ENCODE measurements at regions of chr7 and their contacts with region 1.

Region 1: GRCh38 chr7:75738987-75739795 is 450 bp upstream of the HIP1 start:
- DNase-seq: peak; percentile 99
- ATAC-seq: peak; percentile 87
- H3K4me3 ChIP-seq: peak overlapping the region; percentile 58 to 97 (median 91)
- H3K4me3 Mint-ChIP-seq: peak overlapping the region; percentile 94
- H3K27ac ChIP-seq: peak overlapping the region; percentile 81 to 95
- H3K27ac Mint-ChIP-seq: peak overlapping the region; percentile 97
- H3K4me1 ChIP-seq: peaks cover 31 to 38% of the 10 kb centered on the region in 2 donors
- H3K4me1 Mint-ChIP-seq: peaks cover 34% of the 10 kb centered on the region
- H3K27me3 ChIP-seq: no peaks in the 10 kb centered on the region
- H3K27me3 Mint-ChIP-seq: no peaks in the 10 kb centered on the region
- CTCF ChIP-seq: no peak

Region 2: DNA sequence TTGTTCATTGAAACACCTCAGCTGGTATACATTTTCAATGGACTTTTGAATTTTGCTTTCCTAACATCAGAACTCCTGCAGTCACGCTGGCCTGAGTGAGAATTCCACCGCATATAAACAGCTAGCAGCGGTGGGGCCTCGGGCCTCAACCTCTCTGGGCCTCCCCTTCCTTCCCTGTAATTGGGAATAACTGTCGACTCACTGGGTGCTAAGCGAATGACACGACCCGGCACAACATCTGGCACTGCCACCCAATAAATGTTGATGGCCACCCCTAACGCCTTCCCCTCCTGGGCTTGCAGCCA is 666.3 kb before region 1 on chr7:
- CTCF ChIA-PET with region 1: no interaction called
- POLR2A ChIA-PET with region 1: no interaction called
- intact Hi-C with region 1: loop called (anchors 10 kb)
- DNase-seq: no peak
- ATAC-seq: no peak
- H3K4me3 ChIP-seq: peak overlapping the region; percentile 21 to 79 (median 70)
- H3K4me3 Mint-ChIP-seq: peak overlapping the region; percentile 98
- H3K27ac ChIP-seq: peak overlapping the region; percentile 43 to 90
- H3K27ac Mint-ChIP-seq: peak overlapping the region; percentile 89
- H3K4me1 ChIP-seq: peaks cover 5 to 12% of the 10 kb centered on the region in 2 donors
- H3K4me1 Mint-ChIP-seq: peaks cover 12% of the 10 kb centered on the region
- H3K27me3 ChIP-seq: no peaks in the 10 kb centered on the region
- H3K27me3 Mint-ChIP-seq: no peaks in the 10 kb centered on the region
- CTCF ChIP-seq: no peak

Region 3: DNA sequence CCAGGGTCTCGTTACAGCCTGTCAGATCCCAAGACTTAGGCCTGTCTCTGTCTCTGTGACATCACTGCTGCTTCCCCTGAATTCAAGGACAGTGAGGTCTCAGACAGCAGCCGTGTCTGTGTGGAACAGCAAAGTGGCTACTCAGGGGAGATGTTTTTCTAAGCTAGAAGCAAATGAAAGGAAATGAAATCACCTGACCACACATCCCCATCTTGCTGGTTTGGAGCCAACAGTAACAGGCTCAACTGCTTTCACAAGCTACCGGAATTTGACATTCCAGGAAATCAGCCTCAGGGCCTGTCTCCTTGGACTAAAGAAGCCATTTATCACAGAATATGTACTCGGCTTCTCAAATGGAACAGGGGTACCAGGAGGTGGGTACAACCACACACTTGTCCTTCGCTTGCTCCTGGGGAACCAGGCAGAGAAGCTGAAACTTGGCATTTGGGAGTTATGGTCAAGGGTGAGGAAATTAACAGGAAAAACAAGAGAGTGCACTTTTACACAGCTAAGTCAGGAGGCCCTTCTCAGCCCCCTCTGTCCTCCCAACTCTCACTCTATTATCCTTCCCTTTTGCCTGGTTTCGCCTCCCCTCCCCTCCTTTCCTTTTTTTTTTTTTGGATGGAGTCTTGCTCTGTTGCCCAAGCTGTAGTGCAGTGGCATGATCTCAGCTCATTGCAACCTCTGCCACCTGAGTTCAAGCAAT is 173.9 kb before region 1 on chr7:
- CTCF ChIA-PET with region 1: no interaction called
- POLR2A ChIA-PET with region 1: no interaction called
- intact Hi-C with region 1: no loop called
- DNase-seq: no peak
- ATAC-seq: no peak
- H3K4me3 ChIP-seq: no peak overlapping the region
- H3K4me3 Mint-ChIP-seq: no peak overlapping the region
- H3K27ac ChIP-seq: no peak overlapping the region
- H3K27ac Mint-ChIP-seq: no peak overlapping the region
- H3K4me1 ChIP-seq: no peaks in the 10 kb centered on the region
- H3K4me1 Mint-ChIP-seq: peaks cover 4% of the 10 kb centered on the region
- H3K27me3 ChIP-seq: no peaks in the 10 kb centered on the region
- H3K27me3 Mint-ChIP-seq: no peaks in the 10 kb centered on the region
- CTCF ChIP-seq: no peak

Region 4: DNA sequence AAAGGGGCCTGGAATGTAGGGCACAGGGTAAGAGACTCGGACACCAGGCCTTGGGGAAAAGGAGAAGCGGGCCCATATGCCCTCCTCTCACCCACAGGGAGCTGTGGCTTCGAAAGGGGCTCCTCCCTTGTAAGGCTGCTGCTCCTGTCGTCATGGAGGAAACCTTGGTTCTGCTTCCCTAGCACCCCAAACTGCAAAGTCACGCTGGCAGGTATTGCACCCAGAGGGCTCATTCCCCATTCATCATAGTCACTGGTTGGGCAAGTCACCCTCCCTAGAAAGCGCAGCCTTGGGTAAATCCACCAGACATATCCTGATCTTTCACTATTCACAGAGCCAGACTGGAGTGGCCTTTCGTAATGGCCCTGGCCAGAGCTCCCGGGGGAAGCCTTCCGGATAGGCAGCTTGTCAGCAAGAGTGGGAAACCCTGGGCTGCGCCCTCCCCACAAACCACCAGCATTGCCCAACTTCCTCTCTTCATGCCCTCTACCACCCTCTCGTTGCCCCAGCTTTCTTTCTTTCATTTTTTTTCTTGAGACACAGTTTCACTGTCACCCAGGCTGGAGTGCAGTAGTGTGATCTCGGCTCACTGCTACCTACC is 121.5 kb before region 1 on chr7:
- CTCF ChIA-PET with region 1: no interaction called
- POLR2A ChIA-PET with region 1: interaction called, 4 read pairs
- intact Hi-C with region 1: loop called (anchors 2 kb)
- DNase-seq: peak; percentile 76
- ATAC-seq: peak; percentile 73
- H3K4me3 ChIP-seq: peak overlapping the region in 3 of 5 experiments; percentile 6 to 51 (median 38)
- H3K4me3 Mint-ChIP-seq: peak overlapping the region; percentile 89
- H3K27ac ChIP-seq: peak overlapping the region; percentile 11 to 47
- H3K27ac Mint-ChIP-seq: peak overlapping the region; percentile 95
- H3K4me1 ChIP-seq: peaks cover 53 to 58% of the 10 kb centered on the region in 2 donors
- H3K4me1 Mint-ChIP-seq: peaks cover 54% of the 10 kb centered on the region
- H3K27me3 ChIP-seq: no peaks in the 10 kb centered on the region
- H3K27me3 Mint-ChIP-seq: no peaks in the 10 kb centered on the region
- CTCF ChIP-seq: no peak

Region 5: GRCh38 chr7:75762314-75762917 is 23.2 kb after region 1 on chr7:
- CTCF ChIA-PET with region 1: interaction called, 36 read pairs
- POLR2A ChIA-PET with region 1: interaction called, 4 read pairs
- intact Hi-C with region 1: no loop called
- DNase-seq: peak; percentile 64
- ATAC-seq: peak; percentile 90
- H3K4me3 ChIP-seq: no peak overlapping the region
- H3K4me3 Mint-ChIP-seq: no peak overlapping the region
- H3K27ac ChIP-seq: no peak overlapping the region
- H3K27ac Mint-ChIP-seq: no peak overlapping the region
- H3K4me1 ChIP-seq: no peaks in the 10 kb centered on the region
- H3K4me1 Mint-ChIP-seq: peaks cover 5% of the 10 kb centered on the region
- H3K27me3 ChIP-seq: no peaks in the 10 kb centered on the region
- H3K27me3 Mint-ChIP-seq: no peaks in the 10 kb centered on the region
- CTCF ChIP-seq: peak; percentile 81

Region 6: GRCh38 chr7:75994388-75995051 is 255.3 kb after region 1 on chr7 and contains the start of gene TMEM120A:
- CTCF ChIA-PET with region 1: no interaction called
- POLR2A ChIA-PET with region 1: no interaction called
- intact Hi-C with region 1: loop called (anchors 2 kb)
- DNase-seq: peak; percentile 93
- ATAC-seq: peak; percentile 99
- H3K4me3 ChIP-seq: peak within 1 kb of the TSS; percentile 17 to 94 (median 90)
- H3K4me3 Mint-ChIP-seq: peak within 1 kb of the TSS; percentile 80
- H3K27ac ChIP-seq: peak within 1 kb of the TSS in 1 of 2 donors; percentile 70
- H3K27ac Mint-ChIP-seq: peak within 1 kb of the TSS; percentile 67
- H3K4me1 ChIP-seq: peaks cover 8 to 22% of the 10 kb centered on the region in 2 donors
- H3K4me1 Mint-ChIP-seq: peaks cover 36% of the 10 kb centered on the region
- H3K27me3 ChIP-seq: no peaks in the 10 kb centered on the region
- H3K27me3 Mint-ChIP-seq: no peaks in the 10 kb centered on the region
- CTCF ChIP-seq: no peak
- total RNA-seq, gene TMEM120A: 49.3 and 52.6 TPM in 2 replicates

Measured in B cell (primary cell).